ENCODE measurements at regions of chr1 and their contacts with region 1.

Region 1: GRCh38 chr1:109643385-109644230 is 12.3 kb upstream of the GSTM4 start:
- DNase-seq: peak; percentile 80
- H3K4me3 Mint-ChIP-seq: no peak overlapping the region
- H3K27ac Mint-ChIP-seq: no peak overlapping the region
- H3K4me1 Mint-ChIP-seq: no peaks in the 10 kb centered on the region
- H3K27me3 Mint-ChIP-seq: no peaks in the 10 kb centered on the region
- CTCF ChIP-seq: peak; percentile 85

Region 2: DNA sequence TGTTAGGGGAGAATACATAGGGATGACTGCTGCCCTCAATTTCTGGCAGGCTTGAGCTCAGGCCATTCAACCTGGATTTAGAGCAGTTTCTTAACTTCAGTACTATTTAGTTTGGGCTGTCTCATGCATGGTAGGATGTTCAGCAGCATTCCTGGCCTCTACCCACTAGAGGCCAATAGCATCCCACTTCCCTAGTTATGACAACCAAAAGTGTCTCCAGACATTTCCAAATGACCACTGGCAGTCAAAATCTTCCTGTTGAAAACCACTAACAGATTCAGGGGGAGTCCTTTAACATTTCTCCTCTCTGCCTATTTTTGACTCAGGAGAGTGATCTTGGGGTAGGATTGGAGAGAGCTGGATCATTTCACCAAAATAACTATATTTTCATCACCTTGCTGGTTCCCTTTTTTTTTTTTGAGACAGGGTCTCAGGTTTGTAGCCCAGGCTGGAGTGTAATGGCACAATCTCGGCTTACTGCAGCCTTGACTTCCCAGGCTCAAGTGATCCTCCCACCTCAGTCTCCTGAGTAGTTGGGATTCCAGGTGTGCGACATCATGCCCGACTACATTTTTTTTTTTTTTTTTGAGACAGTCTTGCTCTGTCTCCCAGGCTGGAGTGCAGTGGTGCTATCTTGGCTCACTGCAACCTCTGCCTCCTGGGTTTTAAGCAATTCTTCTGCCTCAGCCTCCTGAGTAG is 32.9 kb before region 1 on chr1:
- CTCF ChIA-PET with region 1: interaction called, 13 read pairs
- POLR2A ChIA-PET with region 1: no interaction called
- intact Hi-C with region 1: no loop called
- DNase-seq: no peak
- H3K4me3 Mint-ChIP-seq: no peak overlapping the region
- H3K27ac Mint-ChIP-seq: no peak overlapping the region
- H3K4me1 Mint-ChIP-seq: no peaks in the 10 kb centered on the region
- H3K27me3 Mint-ChIP-seq: no peaks in the 10 kb centered on the region
- CTCF ChIP-seq: no peak

Region 3: DNA sequence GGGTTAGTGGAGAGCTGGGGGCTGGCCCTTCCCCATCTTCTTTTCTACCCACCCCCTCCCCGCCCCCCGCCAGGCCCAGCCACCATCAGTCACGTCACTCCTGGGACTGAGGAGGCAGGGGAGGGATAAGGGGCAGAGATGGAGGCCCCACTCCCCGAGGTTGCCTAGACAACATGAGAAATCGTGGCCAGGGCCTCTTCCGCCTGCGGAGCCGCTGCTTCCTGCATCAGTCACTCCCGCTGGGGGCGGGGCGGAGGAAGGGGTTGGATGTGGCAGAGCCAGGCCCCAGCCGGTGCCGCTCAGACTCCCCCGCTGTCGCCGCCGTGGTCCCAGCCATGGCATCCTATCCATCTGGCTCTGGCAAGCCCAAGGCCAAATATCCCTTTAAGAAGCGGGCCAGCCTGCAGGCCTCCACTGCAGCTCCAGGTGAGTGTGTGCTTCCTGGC is 22.7 kb before region 1 on chr1:
- CTCF ChIA-PET with region 1: interaction called, 96 read pairs
- POLR2A ChIA-PET with region 1: interaction called, 4 read pairs
- intact Hi-C with region 1: no loop called
- DNase-seq: peak; percentile 85
- H3K4me3 Mint-ChIP-seq: peak overlapping the region; percentile 97
- H3K27ac Mint-ChIP-seq: peak overlapping the region; percentile 92
- H3K4me1 Mint-ChIP-seq: peaks cover 40% of the 10 kb centered on the region
- H3K27me3 Mint-ChIP-seq: no peaks in the 10 kb centered on the region
- CTCF ChIP-seq: no peak

Region 4: DNA sequence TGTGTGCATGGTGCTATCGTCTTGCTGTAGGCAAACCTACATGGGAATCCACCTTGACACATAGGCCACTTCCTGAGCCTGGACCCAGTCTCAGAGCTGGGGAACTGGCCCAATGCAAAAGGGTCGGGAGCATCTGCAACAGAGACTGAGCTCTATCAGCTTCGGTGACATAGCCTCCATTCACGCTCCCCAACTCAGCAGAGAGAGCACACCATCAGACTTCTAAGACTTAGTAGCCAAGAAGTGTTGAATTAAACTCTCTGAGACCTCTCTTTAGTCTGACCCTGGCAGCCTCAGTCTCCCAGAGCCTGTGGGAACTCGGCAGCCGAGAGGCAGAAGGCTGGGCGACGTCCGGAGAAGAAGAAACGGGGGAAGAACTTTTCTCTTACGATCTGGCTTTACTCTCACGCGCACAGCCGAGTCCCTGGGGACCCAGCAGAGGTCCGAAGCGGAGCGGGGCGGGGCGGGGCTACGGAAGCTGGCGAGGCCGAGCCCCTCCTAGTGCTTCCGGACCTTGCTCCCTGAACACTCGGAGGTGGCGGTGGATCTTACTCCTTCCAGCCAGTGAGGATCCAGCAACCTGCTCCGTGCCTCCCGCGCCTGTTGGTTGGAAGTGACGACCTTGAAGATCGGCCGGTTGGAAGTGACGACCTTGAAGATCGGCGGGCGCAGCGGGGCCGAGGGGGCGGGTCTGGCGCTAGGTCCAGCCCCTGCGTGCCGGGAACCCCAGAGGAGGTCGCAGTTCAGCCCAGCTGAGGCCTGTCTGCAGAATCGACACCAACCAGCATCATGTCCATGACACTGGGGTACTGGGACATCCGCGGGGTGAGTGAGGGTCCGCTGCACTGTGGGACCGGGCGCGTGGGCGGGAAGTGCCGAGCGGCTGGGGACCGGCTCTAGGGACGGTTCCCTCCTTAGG is 12.3 kb after region 1 on chr1 and contains the start of gene GSTM4:
- CTCF ChIA-PET with region 1: interaction called, 42 read pairs
- POLR2A ChIA-PET with region 1: interaction called, 4 read pairs
- intact Hi-C with region 1: no loop called
- DNase-seq: peak; percentile 52
- H3K4me3 Mint-ChIP-seq: peak within 1 kb of the TSS; percentile 81
- H3K27ac Mint-ChIP-seq: peak within 1 kb of the TSS; percentile 67
- H3K4me1 Mint-ChIP-seq: no peaks in the 10 kb centered on the region
- H3K27me3 Mint-ChIP-seq: peaks cover 32% of the 10 kb centered on the region
- CTCF ChIP-seq: no peak
- total RNA-seq, gene GSTM4: 4.7 and 5.8 TPM in 2 replicates

Region 5: DNA sequence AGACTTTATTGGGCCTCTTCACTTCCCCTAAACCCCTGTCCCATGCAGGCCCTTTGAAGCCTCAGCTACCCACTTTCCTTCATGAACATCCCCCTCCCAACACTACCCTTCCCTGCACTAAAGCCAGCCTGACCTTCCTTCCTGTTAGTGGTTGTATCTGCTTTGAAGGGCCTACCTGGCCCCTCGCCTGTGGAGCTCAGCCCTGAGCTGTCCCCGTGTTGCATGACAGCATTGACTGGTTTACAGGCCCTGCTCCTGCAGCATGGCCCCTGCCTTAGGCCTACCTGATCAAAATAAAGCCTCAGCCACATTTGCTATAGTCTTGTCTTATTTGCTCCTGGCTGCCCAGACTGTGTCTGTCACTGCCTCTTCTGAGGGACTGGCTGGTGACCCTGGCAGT is 17.8 kb after region 1 on chr1:
- CTCF ChIA-PET with region 1: interaction called, 28 read pairs
- POLR2A ChIA-PET with region 1: interaction called, 4 read pairs
- intact Hi-C with region 1: no loop called
- DNase-seq: no peak
- H3K4me3 Mint-ChIP-seq: no peak overlapping the region
- H3K27ac Mint-ChIP-seq: no peak overlapping the region
- H3K4me1 Mint-ChIP-seq: no peaks in the 10 kb centered on the region
- H3K27me3 Mint-ChIP-seq: no peaks in the 10 kb centered on the region
- CTCF ChIP-seq: no peak

Region 6: DNA sequence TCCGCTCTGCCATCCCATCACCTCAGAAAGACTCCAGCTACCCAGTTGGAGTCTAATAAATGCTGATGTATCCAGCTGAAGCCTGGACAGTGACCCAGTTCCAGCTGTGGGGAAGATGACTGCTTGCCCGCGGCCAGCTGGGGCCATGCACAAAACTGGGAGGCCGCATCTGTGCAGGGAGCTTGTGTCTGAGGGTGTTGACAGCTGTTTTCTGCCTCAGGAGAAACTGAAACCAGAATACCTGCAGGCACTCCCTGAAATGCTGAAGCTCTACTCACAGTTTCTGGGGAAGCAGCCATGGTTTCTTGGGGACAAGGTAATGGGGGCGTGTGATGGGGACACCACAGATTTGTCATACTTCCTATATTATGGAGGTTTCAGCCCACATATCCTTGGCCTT is 27.5 kb after region 1 on chr1:
- CTCF ChIA-PET with region 1: interaction called, 11 read pairs
- POLR2A ChIA-PET with region 1: no interaction called
- intact Hi-C with region 1: no loop called
- DNase-seq: no peak
- H3K4me3 Mint-ChIP-seq: no peak overlapping the region
- H3K27ac Mint-ChIP-seq: no peak overlapping the region
- H3K4me1 Mint-ChIP-seq: no peaks in the 10 kb centered on the region
- H3K27me3 Mint-ChIP-seq: no peaks in the 10 kb centered on the region
- CTCF ChIP-seq: no peak

Region 7: DNA sequence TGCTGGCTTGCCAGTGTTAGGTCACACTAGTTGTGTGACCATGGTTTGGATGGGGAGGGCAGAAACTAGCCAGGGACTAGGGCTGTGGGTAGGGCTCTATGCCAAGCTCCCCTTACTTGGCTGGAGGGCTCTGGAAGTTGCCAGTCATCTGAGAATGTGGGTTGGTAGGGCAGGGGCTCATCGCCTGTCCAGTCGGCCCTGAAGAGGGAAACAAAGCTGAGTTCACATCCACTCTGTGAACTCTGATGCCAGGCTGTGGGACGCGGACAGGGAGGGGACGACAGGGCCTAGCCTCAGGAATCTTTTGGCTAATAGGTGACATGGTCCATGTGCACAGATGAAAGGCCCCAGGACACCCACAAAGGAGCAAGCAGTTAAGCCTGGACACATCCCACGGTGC is 109.4 kb after region 1 on chr1:
- CTCF ChIA-PET with region 1: interaction called, 15 read pairs
- POLR2A ChIA-PET with region 1: no interaction called
- intact Hi-C with region 1: no loop called
- DNase-seq: no peak
- H3K4me3 Mint-ChIP-seq: no peak overlapping the region
- H3K27ac Mint-ChIP-seq: no peak overlapping the region
- H3K4me1 Mint-ChIP-seq: no peaks in the 10 kb centered on the region
- H3K27me3 Mint-ChIP-seq: peaks cover 37% of the 10 kb centered on the region
- CTCF ChIP-seq: no peak